ENCODE measurements at regions of chr12 and their contacts with region 1.

Region 1: GRCh38 chr12:34218165-34219045 is 196.1 kb downstream of the ALG10 start:
- DNase-seq: peak in 1 of 2 donors; percentile 30
- ATAC-seq: no peak
- H3K4me3 ChIP-seq: peak overlapping the region in 3 of 4 donors; percentile 32 to 44 (median 37)
- H3K27ac ChIP-seq: no peak overlapping the region
- H3K4me1 ChIP-seq: no peaks in the 10 kb centered on the region
- H3K27me3 ChIP-seq: no peaks in the 10 kb centered on the region
- CTCF ChIP-seq: peak; percentile 51 to 80 (median 58)
- POLR2A ChIP-seq: no peak

Region 2: GRCh38 chr12:32755654-32756475 is 1462.5 kb before region 1 on chr12 and contains the start of gene YARS2:
- in situ Hi-C with region 1: loop called in 2 of 4 experiments (anchors 25 kb)
- intact Hi-C with region 1: no loop called
- DNase-seq: peak; percentile 95 to 96
- ATAC-seq: peak; percentile 99 to 100
- H3K4me3 ChIP-seq: peak within 1 kb of the TSS; percentile 80 to 100 (median 96)
- H3K27ac ChIP-seq: peak within 1 kb of the TSS; percentile 81 to 88 (median 84)
- H3K4me1 ChIP-seq: peaks cover 12 to 15% of the 10 kb centered on the region in 2 donors
- H3K27me3 ChIP-seq: no peaks in the 10 kb centered on the region
- CTCF ChIP-seq: peak; percentile 74 to 92 (median 79)
- POLR2A ChIP-seq: peak in 1 of 2 donors; percentile 35
- total RNA-seq, gene YARS2: 9.1 to 19.4 (median 13.9) TPM

Region 3: DNA sequence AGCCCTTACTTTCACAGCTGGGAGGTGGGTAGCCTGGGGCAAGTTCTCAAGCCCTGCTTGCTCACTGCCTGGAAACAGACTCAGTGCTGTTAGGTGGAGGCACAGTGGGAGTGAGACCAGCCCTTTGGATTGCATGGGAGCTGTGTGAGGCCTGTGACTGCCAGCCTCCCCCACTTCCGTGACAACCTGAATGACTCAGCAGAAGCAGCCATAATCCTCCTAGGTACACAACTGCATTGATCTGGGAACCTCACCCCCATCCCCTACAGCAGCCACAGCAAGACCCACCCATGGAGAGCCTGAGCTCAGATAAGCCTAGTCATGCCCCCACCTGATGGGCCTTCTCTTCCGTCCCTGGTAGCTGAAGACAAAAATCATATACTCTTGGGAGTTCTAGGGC is 169.7 kb before region 1 on chr12:
- in situ Hi-C with region 1: loop called in 1 of 4 experiments (anchors 10 kb)
- intact Hi-C with region 1: no loop called
- DNase-seq: no peak
- ATAC-seq: no peak
- H3K4me3 ChIP-seq: no peak overlapping the region
- H3K27ac ChIP-seq: no peak overlapping the region
- H3K4me1 ChIP-seq: no peaks in the 10 kb centered on the region
- H3K27me3 ChIP-seq: no peaks in the 10 kb centered on the region
- CTCF ChIP-seq: no peak
- POLR2A ChIP-seq: no peak

Region 4: GRCh38 chr12:34126239-34126641 is 92.2 kb before region 1 on chr12:
- in situ Hi-C with region 1: loop called in 1 of 4 experiments (anchors 10 kb)
- intact Hi-C with region 1: loop called (anchors 2 kb)
- DNase-seq: no peak
- ATAC-seq: no peak
- H3K4me3 ChIP-seq: peak overlapping the region in 1 of 4 donors; percentile 12
- H3K27ac ChIP-seq: no peak overlapping the region
- H3K4me1 ChIP-seq: no peaks in the 10 kb centered on the region
- H3K27me3 ChIP-seq: no peaks in the 10 kb centered on the region
- CTCF ChIP-seq: no peak
- POLR2A ChIP-seq: no peak

Region 5: DNA sequence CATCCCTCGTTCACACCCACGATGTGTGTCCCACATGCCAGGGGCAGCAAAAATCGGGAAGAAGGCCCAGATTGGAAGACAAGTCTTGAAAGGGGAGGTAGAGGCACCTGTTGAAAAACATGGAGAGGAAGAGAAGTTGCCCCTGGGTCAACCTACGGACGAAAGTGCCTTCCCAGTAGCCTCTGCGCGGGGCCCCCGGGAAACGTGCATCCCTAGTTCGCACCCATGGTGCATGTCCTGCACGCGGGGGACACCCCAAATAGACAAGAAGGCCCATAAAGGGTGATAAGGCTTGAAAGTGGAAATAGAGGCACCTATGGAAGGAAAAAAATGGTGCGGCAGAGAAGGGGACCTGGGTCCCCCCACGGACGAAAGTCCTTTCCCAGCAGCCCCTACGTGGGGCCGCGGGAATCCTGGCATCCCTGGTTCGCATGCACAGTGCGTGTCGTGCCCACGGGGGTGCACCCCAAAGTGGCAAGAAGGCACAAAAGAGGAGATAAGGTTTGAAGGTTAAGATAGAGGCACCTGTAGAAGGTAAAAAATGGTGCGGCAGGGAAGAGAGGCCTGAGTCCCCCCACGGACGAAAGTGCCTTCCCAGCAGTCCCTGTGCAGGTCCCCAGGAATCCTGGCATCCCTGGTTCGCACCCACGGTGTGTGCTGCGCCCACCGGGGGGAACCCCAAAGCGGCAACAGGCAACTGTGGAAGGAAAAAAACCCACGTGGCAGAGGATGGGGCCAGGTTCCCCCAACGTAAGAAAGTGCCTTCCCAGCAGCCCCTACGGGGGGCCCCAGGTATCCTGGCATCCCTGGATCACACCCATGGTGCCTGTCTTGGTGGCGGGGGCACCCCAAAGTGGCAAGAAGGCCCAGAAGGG is 82.2 kb after region 1 on chr12:
- in situ Hi-C with region 1: loop called in 1 of 4 experiments (anchors 25 kb)
- intact Hi-C with region 1: no loop called
- DNase-seq: no peak
- ATAC-seq: no peak
- H3K4me3 ChIP-seq: no peak overlapping the region
- H3K27ac ChIP-seq: no peak overlapping the region
- H3K4me1 ChIP-seq: no peaks in the 10 kb centered on the region
- H3K27me3 ChIP-seq: no peaks in the 10 kb centered on the region
- CTCF ChIP-seq: no peak
- POLR2A ChIP-seq: no peak

Measured in gastrocnemius medialis (tissue), 4 donors.